Activated CD4-positive, alpha-beta T cell treated with anti-CD3 and anti-CD28 coated beads for 36 hours (primary cell): ENCODE measurements at regions of chr11 and their contacts with region 1.

Region 1: GRCh38 chr11:64747961-64748665 is 4.2 kb upstream of the RASGRP2 start:
- DNase-seq: no peak
- ATAC-seq: no peak
- H3K4me3 Mint-ChIP-seq: no peak overlapping the region
- H3K27ac Mint-ChIP-seq: no peak overlapping the region
- H3K4me1 Mint-ChIP-seq: peaks cover 21% of the 10 kb centered on the region
- H3K27me3 Mint-ChIP-seq: peaks cover 5% of the 10 kb centered on the region

Region 2: DNA sequence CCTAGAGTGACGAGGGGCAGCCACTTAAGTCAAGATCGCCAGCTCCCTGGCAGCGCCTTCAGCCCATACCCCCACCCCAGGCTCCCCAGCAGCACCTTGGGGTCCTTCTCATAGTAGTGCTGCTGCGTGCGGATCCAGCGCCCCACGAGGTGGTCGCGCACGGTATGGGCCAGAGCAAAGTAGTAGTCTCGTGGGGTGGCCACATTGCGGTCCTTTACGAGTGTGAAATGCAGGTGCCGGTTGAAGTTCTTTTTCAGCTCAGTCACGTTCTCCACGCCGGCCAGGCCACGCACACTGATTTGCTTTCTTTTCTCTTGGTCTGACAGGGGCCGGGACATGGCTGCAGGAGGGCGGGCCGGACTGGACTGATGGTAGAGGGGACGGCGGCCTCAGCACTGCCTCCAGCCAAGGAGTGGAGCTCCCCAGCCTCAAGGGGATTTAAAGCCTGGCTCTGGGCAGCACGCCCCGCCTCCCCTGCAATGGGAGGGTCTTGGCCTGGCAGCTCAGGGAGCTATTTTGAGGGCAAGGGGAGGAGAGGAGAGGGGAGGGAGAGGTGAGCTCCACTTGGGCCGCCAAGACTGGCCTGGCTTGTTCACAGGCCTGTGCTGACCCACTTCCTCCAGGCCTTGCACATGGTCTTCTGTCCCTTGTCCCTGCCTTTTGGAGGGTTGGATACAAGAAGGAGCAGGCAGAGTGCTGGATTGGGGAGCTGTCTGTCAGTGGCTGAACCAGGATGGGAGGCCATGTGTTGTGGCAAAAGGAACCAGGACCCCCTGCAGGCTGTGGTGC is 11.6 kb after region 1 on chr11 and contains the start of gene PYGM:
- CTCF ChIA-PET with region 1: interaction called, 10 read pairs
- POLR2A ChIA-PET with region 1: interaction called, 12 read pairs
- intact Hi-C with region 1: loop called in 1 of 2 experiments (anchors 2 kb)
- DNase-seq: no peak
- ATAC-seq: no peak
- H3K4me3 Mint-ChIP-seq: no peak within 1 kb of the TSS
- H3K27ac Mint-ChIP-seq: peak within 1 kb of the TSS; percentile 83
- H3K4me1 Mint-ChIP-seq: peaks cover 46% of the 10 kb centered on the region
- H3K27me3 Mint-ChIP-seq: no peaks in the 10 kb centered on the region
- total RNA-seq, gene PYGM: 0.87 to 1.5 TPM

Region 3: DNA sequence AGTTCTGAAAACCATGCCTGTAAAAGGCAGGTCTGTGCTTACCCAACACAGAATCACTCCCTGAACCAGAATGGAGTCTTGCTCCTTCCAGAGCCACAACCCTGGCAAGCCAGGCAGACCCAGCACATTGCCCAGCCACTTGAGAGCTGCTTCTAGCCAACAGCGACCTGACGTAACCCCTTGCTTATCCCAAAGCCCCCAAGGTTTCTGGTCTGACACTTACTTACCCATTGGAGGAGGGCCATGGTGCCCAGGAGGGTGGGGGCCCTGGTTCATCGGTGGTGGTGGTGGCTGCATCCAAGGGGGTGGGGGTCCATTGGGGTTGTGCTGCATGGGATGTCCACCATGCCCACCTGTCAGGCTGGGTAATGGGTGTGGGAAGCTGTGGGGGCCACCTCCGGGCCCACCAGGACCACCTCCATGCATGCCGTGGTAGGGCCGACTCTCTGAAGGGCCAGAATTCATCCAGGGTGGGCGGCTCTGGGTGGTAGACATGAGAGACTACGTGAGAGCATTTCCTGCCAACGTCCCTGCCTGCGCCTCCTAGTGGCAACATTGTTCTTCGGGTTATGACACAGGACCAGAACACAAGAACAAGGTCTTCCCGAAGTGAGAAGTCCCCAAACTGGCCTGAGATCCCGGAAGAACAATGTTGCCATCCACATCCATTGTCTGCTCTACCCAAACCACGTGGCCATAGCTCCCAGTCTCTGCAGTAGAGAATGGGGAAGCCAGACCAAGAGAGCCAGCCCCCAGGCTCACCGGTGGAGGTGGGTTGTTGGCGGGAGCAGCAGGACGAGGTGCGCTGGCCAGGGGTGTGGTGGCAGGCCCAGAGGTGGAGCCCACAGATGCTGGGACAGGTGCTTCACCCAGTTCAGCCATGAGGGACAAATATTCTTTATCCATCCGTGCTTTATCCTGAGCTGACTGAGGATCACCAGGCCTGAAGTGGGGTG is 19.5 kb after region 1 on chr11:
- CTCF ChIA-PET with region 1: interaction called, 10 read pairs
- POLR2A ChIA-PET with region 1: interaction called, 12 read pairs
- intact Hi-C with region 1: loop called in 1 of 2 experiments (anchors 2 kb)
- DNase-seq: peak; percentile 90
- ATAC-seq: peak; percentile 50
- H3K4me3 Mint-ChIP-seq: no peak overlapping the region
- H3K27ac Mint-ChIP-seq: peak overlapping the region; percentile 88
- H3K4me1 Mint-ChIP-seq: peaks cover 91% of the 10 kb centered on the region
- H3K27me3 Mint-ChIP-seq: no peaks in the 10 kb centered on the region